Gastrocnemius medialis (tissue), 4 donors: ENCODE measurements at regions of chr1 and their contacts with region 1.

Region 1: GRCh38 chr1:56821140-56821797 is 2.1 kb upstream of the FYB2 start:
- DNase-seq: peak; percentile 62 to 72
- ATAC-seq: peak; percentile 54 to 74
- H3K4me3 ChIP-seq: no peak overlapping the region
- H3K27ac ChIP-seq: no peak overlapping the region
- H3K4me1 ChIP-seq: peaks cover 27 to 35% of the 10 kb centered on the region in 2 donors
- H3K27me3 ChIP-seq: no peaks in the 10 kb centered on the region
- CTCF ChIP-seq: peak; percentile 90 to 97 (median 94)
- POLR2A ChIP-seq: no peak

Region 2: DNA sequence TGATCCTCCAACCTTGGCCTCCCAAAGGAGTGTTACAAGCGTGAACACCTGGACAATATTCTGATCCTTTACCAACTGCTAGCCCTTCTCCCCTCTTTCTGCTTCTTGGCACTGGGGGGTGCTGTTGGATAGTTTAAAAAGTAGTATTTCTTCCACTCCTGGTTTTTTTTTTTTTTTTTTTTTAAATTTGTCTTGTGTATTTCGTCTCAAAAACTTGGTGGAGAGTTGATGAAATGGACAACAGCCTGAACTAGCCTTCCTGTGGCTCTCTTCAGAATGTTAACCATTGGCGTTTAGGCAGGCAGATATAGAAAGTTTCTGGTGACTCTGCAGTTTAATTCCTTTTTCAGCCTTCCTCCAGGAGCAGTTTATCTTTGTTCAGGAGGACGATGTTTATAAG is 1536.4 kb before region 1 on chr1:
- in situ Hi-C with region 1: no loop called
- intact Hi-C with region 1: loop called (anchors 10 kb)
- DNase-seq: no peak
- ATAC-seq: peak; percentile 64 to 65
- H3K4me3 ChIP-seq: no peak overlapping the region
- H3K27ac ChIP-seq: no peak overlapping the region
- H3K4me1 ChIP-seq: no peaks in the 10 kb centered on the region
- H3K27me3 ChIP-seq: no peaks in the 10 kb centered on the region
- CTCF ChIP-seq: peak; percentile 32 to 61 (median 47)
- POLR2A ChIP-seq: no peak

Region 3: GRCh38 chr1:56357927-56358690 is 463.2 kb before region 1 on chr1:
- in situ Hi-C with region 1: no loop called
- intact Hi-C with region 1: loop called (anchors 10 kb)
- DNase-seq: no peak
- ATAC-seq: no peak
- H3K4me3 ChIP-seq: no peak overlapping the region
- H3K27ac ChIP-seq: peak overlapping the region; percentile 73 to 92 (median 82)
- H3K4me1 ChIP-seq: peaks cover 50 to 54% of the 10 kb centered on the region in 2 donors
- H3K27me3 ChIP-seq: no peaks in the 10 kb centered on the region
- CTCF ChIP-seq: no peak
- POLR2A ChIP-seq: no peak

Region 4: GRCh38 chr1:56644919-56645676 is 176.2 kb before region 1 on chr1 and contains the start of gene PRKAA2:
- in situ Hi-C with region 1: no loop called
- intact Hi-C with region 1: loop called (anchors 5 kb)
- DNase-seq: peak; percentile 18 to 53
- ATAC-seq: peak; percentile 62 to 65
- H3K4me3 ChIP-seq: peak within 1 kb of the TSS; percentile 66 to 82 (median 68)
- H3K27ac ChIP-seq: peak within 1 kb of the TSS; percentile 87 to 94 (median 90)
- H3K4me1 ChIP-seq: peaks cover 20 to 25% of the 10 kb centered on the region in 2 donors
- H3K27me3 ChIP-seq: no peaks in the 10 kb centered on the region
- CTCF ChIP-seq: no peak
- POLR2A ChIP-seq: peak; percentile 62 to 66
- total RNA-seq, gene PRKAA2: 24.6 to 78.6 (median 70.9) TPM

Region 5: DNA sequence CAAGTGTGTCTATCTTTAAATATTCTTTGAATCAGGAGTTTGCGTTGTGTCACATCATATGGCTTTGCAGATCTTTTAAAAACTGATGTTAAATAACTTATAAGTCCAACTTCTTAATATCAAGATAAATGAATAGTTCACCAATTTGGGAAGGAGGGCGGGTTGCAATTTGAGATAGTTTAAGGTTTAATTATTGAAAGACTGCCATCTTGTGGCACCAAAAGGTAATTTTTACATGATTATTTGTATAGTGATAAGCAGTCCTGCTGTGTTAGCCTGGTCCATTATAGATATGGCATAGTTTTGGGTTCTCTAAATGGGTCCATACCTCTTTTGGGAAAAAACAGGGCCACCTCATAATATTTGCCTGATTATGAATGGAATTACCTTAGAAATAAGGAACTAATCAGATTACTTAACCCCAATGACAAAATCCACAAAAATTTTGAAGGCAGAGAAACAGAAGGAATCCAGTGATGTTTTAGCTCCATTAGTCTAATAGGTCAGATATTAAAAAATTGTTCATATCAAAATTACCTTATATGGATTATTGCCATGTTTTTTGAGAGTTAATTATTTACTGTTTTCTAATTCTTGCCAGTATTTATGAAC is 111.9 kb before region 1 on chr1:
- in situ Hi-C with region 1: no loop called
- intact Hi-C with region 1: loop called (anchors 5 kb)
- DNase-seq: no peak
- ATAC-seq: peak; percentile 64 to 83
- H3K4me3 ChIP-seq: no peak overlapping the region
- H3K27ac ChIP-seq: no peak overlapping the region
- H3K4me1 ChIP-seq: peaks cover 0 to 4% of the 10 kb centered on the region in 2 donors
- H3K27me3 ChIP-seq: no peaks in the 10 kb centered on the region
- CTCF ChIP-seq: peak; percentile 58 to 67 (median 64)
- POLR2A ChIP-seq: no peak

Region 6: DNA sequence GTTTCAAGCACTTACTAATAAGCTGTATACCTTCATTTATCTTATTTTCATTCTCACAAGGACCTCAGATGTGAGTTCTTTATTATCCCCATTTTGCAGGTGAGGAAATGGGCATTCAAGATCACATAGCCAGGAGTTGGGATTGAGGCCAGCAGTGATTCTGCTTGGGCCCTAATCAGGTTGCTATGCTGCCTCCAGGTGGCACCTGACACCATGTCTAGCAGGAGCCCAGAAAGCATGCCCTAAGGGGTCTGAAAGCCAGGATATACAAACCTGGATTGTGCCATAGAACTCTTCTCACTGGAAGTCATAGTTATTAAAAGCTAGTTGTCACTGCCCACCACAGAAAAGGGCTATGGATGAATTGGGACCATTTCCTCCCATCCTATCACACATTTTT is 63.1 kb before region 1 on chr1:
- in situ Hi-C with region 1: loop called in 2 of 4 experiments (anchors 5 to 10 kb)
- intact Hi-C with region 1: loop called (anchors 1 kb)
- DNase-seq: peak; percentile 7 to 49
- ATAC-seq: peak; percentile 83 to 92
- H3K4me3 ChIP-seq: no peak overlapping the region
- H3K27ac ChIP-seq: no peak overlapping the region
- H3K4me1 ChIP-seq: no peaks in the 10 kb centered on the region
- H3K27me3 ChIP-seq: no peaks in the 10 kb centered on the region
- CTCF ChIP-seq: peak; percentile 32 to 72 (median 51)
- POLR2A ChIP-seq: no peak